K562 (cell line): ENCODE measurements at regions of chr17 and their contacts with region 1.

Region 1: GRCh38 chr17:66567234-66568170 is 265.1 kb downstream of the PRKCA start:
- DNase-seq: peak; percentile 63 to 85 (median 68)
- ATAC-seq: peak; percentile 99
- H3K4me3 ChIP-seq: no peak overlapping the region
- H3K27ac ChIP-seq: no peak overlapping the region
- H3K4me1 ChIP-seq: no peaks in the 10 kb centered on the region; a peak in 1 of 5 replicates
- H3K27me3 ChIP-seq: no peaks in the 10 kb centered on the region
- CTCF ChIP-seq: peak; percentile 87 to 93 (median 92)
- EP300 ChIP-seq: peak; percentile 33; the same call in 1 of the 2 replicates
- POLR2A ChIP-seq: no peak
- RAD21 ChIP-seq: peak; percentile 87 to 97

Region 2: DNA sequence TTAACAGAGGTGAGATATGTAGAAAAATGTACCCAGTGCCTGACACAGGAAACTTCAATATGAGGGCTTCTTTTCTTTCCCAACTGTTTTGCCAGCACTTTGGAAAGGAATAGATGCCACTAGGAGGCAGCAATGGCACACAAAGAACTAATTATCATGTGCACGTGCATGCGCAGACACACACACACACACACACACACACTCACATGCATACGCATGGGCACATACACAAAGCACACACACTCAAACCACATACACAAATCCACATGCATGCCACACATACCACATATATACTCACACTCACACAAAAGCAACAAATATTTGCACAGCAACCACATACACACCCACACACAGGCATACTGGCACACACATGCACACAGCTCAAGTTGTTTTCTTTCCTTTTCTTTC is 366.8 kb before region 1 on chr17:
- CTCF ChIA-PET with region 1: interaction called, 3 read pairs
- POLR2A ChIA-PET with region 1: no interaction called
- in situ Hi-C with region 1: no loop called
- intact Hi-C with region 1: loop called (anchors 2 kb)
- DNase-seq: peak; percentile 17 to 65 (median 30)
- ATAC-seq: peak; percentile 79
- H3K4me3 ChIP-seq: no peak overlapping the region
- H3K27ac ChIP-seq: no peak overlapping the region
- H3K4me1 ChIP-seq: no peaks in the 10 kb centered on the region
- H3K27me3 ChIP-seq: peaks cover 11 to 33% of the 10 kb centered on the region in 2 experiments; a peak in 4 of 5 replicates
- CTCF ChIP-seq: peak; percentile 60 to 78 (median 63); a peak in 5 of 6 replicates
- EP300 ChIP-seq: no peak
- POLR2A ChIP-seq: no peak
- RAD21 ChIP-seq: peak; percentile 61 to 84

Region 3: DNA sequence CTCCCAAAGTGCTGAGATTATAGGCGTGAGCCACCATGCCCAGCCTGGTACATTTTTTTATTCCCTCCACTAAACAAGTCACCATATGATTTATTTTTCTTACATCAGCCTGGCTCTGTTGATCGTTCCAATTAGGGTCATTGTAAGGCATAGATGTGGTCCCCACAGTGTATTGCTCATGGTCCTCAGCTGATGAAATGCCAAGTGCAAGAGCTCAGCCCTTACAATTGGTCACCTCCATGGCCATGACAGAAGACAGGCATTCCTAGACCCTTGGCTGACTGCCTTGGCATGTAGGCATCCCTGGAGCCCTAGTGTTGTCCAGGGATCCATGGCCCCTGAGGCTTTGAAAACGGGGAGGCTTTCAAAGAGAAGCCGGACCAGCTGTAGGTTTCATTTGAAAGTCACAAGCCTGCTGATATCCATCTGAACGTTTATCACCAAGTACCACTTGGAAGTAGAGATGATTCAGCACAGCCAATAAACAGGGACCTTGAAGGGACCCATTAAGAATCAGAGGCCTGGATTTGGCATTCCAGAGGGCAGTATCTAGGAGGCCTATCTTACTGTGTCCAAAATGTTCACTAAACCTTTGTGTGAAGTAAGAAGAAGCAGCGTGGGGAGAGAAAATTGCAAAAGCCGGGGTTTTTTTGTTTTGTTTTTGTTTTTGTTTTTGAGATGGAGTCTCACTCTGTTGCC is 285.7 kb before region 1 on chr17:
- CTCF ChIA-PET with region 1: no interaction called
- POLR2A ChIA-PET with region 1: no interaction called
- in situ Hi-C with region 1: loop called (anchors 10 kb)
- intact Hi-C with region 1: no loop called
- DNase-seq: peak in 1 of 4 experiments; percentile 28
- ATAC-seq: peak; percentile 51
- H3K4me3 ChIP-seq: no peak overlapping the region
- H3K27ac ChIP-seq: no peak overlapping the region
- H3K4me1 ChIP-seq: peaks cover 0 to 6% of the 10 kb centered on the region in 2 experiments; a peak in 3 of 5 replicates
- H3K27me3 ChIP-seq: peaks cover 4 to 6% of the 10 kb centered on the region in 2 experiments; a peak in 2 of 5 replicates
- CTCF ChIP-seq: no peak
- EP300 ChIP-seq: peak; percentile 44
- POLR2A ChIP-seq: no peak
- RAD21 ChIP-seq: no peak

Region 4: DNA sequence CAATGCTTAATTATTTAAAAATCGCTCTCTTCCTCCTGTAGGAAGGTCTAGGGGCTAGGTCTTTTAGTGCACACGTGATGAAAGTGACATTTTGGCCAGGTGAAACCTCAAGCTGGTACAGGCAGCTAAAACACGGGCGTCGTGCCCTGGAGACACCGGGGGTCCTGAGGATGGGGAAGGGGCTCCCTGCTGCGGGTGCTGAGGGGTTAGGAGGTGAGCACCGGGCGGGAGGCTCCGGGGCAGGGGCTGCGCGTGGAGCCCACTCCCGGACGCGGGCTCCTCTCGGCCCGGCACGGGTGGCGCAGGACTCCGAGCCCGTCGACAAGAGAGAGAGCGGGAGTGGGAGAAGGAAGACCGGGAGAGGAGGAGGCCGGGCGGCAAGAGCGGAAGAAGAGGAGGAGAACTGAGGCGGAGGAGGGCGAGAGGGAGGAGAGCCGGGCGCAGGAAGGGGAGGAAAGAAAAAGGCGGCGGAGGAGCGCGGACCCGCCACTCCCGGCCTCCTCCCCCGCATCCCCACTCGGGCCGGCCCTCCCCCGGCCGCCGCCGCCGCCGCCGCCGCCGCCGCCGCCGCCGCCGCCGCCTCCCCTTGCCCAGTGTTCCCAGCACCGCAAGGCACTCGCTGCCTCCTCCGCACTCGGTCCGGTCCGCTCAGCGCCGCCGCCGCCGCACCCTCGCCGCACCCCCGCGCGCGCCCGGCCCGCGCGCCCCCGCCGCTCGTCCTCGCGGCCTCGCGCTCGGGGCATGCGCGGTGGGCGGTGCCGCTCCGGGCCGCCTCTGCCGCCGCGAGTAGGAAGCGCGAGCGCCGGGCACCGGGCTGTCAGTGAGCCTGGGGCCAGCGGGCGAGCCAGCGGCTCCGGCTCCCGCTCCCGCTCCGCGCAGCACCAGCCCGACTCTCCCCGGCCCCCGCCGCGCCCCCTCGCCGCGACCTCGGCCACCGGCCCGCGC is 265.4 kb before region 1 on chr17 and contains the start of gene PRKCA:
- CTCF ChIA-PET with region 1: no interaction called
- POLR2A ChIA-PET with region 1: no interaction called
- in situ Hi-C with region 1: no loop called
- intact Hi-C with region 1: loop called (anchors 5 kb)
- DNase-seq: peak; percentile 79 to 84 (median 80)
- ATAC-seq: peak; percentile 35
- H3K4me3 ChIP-seq: peak within 1 kb of the TSS; percentile 75
- H3K27ac ChIP-seq: peak within 1 kb of the TSS; percentile 68
- H3K4me1 ChIP-seq: peaks cover 17 to 28% of the 10 kb centered on the region in 2 experiments; a peak in 4 of 5 replicates
- H3K27me3 ChIP-seq: no peaks in the 10 kb centered on the region
- CTCF ChIP-seq: no peak
- EP300 ChIP-seq: no peak
- POLR2A ChIP-seq: no peak; the same call in 1 of the 2 replicates
- RAD21 ChIP-seq: no peak
- polyA plus RNA-seq, gene PRKCA: 3.2 to 5.3 TPM

Region 5: DNA sequence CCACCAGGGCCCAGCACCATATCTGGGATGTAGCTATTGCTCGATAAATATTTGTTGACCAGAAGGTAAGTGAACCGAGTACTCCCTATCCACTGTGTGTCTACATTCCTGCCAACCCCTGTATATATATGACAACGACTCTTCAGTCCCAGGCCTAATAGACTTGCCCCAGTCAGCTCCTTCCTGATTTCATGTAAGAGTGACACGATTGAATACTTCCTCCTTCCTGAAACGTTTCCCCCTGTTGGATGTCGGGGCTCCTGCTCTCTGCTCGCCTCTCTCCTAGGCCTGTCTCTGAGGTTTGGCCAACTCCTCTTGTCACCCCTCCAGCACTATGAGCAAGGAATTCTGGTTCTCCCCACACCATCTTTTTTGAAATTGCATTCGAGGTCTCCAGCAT is 86.2 kb before region 1 on chr17:
- CTCF ChIA-PET with region 1: no interaction called
- POLR2A ChIA-PET with region 1: no interaction called
- in situ Hi-C with region 1: no loop called
- intact Hi-C with region 1: no loop called
- DNase-seq: no peak
- ATAC-seq: no peak; the same call in 2 of the 3 replicates
- H3K4me3 ChIP-seq: no peak overlapping the region
- H3K27ac ChIP-seq: no peak overlapping the region
- H3K4me1 ChIP-seq: peaks cover under 1 to 3% of the 10 kb centered on the region in 2 experiments; a peak in 2 of 5 replicates
- H3K27me3 ChIP-seq: no peaks in the 10 kb centered on the region
- CTCF ChIP-seq: no peak
- EP300 ChIP-seq: no peak
- POLR2A ChIP-seq: no peak
- RAD21 ChIP-seq: no peak

Region 6: GRCh38 chr17:66507103-66507853 is 60.2 kb before region 1 on chr17:
- CTCF ChIA-PET with region 1: no interaction called
- POLR2A ChIA-PET with region 1: no interaction called
- in situ Hi-C with region 1: no loop called
- intact Hi-C with region 1: loop called (anchors 2 kb)
- DNase-seq: peak; percentile 56 to 78 (median 70)
- ATAC-seq: peak; percentile 79
- H3K4me3 ChIP-seq: no peak overlapping the region
- H3K27ac ChIP-seq: peak overlapping the region; percentile 86
- H3K4me1 ChIP-seq: peaks cover 25 to 46% of the 10 kb centered on the region in 2 experiments
- H3K27me3 ChIP-seq: no peaks in the 10 kb centered on the region
- CTCF ChIP-seq: no peak
- EP300 ChIP-seq: peak; percentile 48
- POLR2A ChIP-seq: no peak
- RAD21 ChIP-seq: no peak

Region 7: GRCh38 chr17:66518677-66519076 is 48.8 kb before region 1 on chr17:
- CTCF ChIA-PET with region 1: no interaction called
- POLR2A ChIA-PET with region 1: no interaction called
- in situ Hi-C with region 1: no loop called
- intact Hi-C with region 1: no loop called
- DNase-seq: no peak
- ATAC-seq: no peak
- H3K4me3 ChIP-seq: no peak overlapping the region
- H3K27ac ChIP-seq: no peak overlapping the region
- H3K4me1 ChIP-seq: no peaks in the 10 kb centered on the region
- H3K27me3 ChIP-seq: no peaks in the 10 kb centered on the region
- CTCF ChIP-seq: no peak
- EP300 ChIP-seq: no peak
- POLR2A ChIP-seq: no peak
- RAD21 ChIP-seq: no peak